Activated T-helper 1 cell treated with anti-CD3 and anti-CD28 coated beads, Interleukin-12 subunit alpha, Interleukin-12 subunit beta, Interleukin-2, Interleukin-4 antibody, amounts not matched to agents 30 ng/mL and 10 ng/mL and 1 ng/mL, durations not matched to agents 14 hours and 24 hours and 36 hours (primary cell): ENCODE measurements at regions of chr9 and their contacts with region 1.

Region 1: DNA sequence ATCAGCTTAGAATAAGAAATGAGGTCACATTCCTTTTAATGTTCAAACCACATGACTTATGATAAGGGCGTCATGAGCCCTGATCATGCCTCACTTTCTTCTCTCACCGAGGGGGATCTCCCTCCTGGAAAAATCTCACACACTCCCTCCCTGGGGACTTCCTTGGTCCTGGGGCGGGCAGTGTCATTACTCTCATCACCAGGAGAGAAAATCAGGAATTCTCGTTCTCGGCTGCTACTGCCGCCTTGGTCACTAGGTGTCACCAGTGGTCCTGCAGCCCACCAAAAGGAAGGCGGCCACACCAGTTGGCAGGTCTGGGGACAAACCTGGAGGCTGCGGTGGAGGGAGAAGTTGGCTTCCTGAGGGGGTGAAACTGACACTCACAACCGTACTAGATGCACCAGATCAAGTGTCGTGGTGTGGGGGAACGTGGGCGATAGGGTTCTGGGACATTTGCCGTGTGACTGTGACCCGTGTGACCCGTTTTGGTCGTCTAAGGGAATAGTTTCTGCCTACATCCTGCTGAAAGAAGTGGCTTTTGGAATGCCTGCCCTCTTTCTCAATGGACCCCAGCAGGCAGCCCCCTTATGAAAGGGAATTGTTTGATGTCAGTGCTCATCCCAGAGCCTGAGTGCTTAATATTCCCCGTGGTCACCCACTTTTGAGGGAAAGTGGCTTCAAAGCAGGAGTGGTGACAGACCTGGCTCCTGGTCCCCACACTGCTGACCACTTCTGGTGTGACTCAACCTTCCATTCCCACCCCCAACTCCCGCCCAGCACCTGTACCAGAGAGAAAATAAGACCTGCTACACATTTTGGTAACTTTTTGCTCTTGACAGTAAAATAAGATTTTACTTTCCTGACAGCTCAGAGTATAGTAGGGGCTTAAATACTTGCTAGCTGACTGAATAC is 63.2 kb downstream of the ACER2 start:
- DNase-seq: no peak
- H3K4me3 Mint-ChIP-seq: no peak overlapping the region
- H3K27ac Mint-ChIP-seq: peak overlapping the region; percentile 4
- H3K4me1 Mint-ChIP-seq: peaks cover 19% of the 10 kb centered on the region
- H3K27me3 Mint-ChIP-seq: peaks cover 15% of the 10 kb centered on the region

Region 2: GRCh38 chr9:19517202-19517942 is 45.4 kb after region 1 on chr9:
- intact Hi-C with region 1: loop called (anchors 5 kb)
- DNase-seq: no peak
- H3K4me3 Mint-ChIP-seq: no peak overlapping the region
- H3K27ac Mint-ChIP-seq: no peak overlapping the region
- H3K4me1 Mint-ChIP-seq: peaks cover 27% of the 10 kb centered on the region
- H3K27me3 Mint-ChIP-seq: peaks cover under 1% of the 10 kb centered on the region

Region 3: GRCh38 chr9:19568946-19569345 is 97.0 kb after region 1 on chr9:
- intact Hi-C with region 1: no loop called
- DNase-seq: no peak
- H3K4me3 Mint-ChIP-seq: no peak overlapping the region
- H3K27ac Mint-ChIP-seq: no peak overlapping the region
- H3K4me1 Mint-ChIP-seq: no peaks in the 10 kb centered on the region
- H3K27me3 Mint-ChIP-seq: peaks cover 3% of the 10 kb centered on the region

Region 4: GRCh38 chr9:19637084-19637483 is 165.1 kb after region 1 on chr9:
- intact Hi-C with region 1: loop called (anchors 5 kb)
- DNase-seq: no peak
- H3K4me3 Mint-ChIP-seq: no peak overlapping the region
- H3K27ac Mint-ChIP-seq: no peak overlapping the region
- H3K4me1 Mint-ChIP-seq: no peaks in the 10 kb centered on the region
- H3K27me3 Mint-ChIP-seq: no peaks in the 10 kb centered on the region